ENCODE measurements at regions of chr11 and their contacts with region 1.

Region 1: GRCh38 chr11:1852877-1853276 is at the start of gene LSP1:
- DNase-seq: peak; percentile 95
- ATAC-seq: peak; percentile 65
- H3K4me3 Mint-ChIP-seq: peak within 1 kb of the TSS; percentile 86
- H3K27ac Mint-ChIP-seq: peak within 1 kb of the TSS; percentile 95
- H3K4me1 Mint-ChIP-seq: peaks cover 53% of the 10 kb centered on the region
- H3K27me3 Mint-ChIP-seq: no peaks in the 10 kb centered on the region
- CTCF ChIP-seq: no peak
- total RNA-seq, gene LSP1: 247 to 251 TPM

Region 2: DNA sequence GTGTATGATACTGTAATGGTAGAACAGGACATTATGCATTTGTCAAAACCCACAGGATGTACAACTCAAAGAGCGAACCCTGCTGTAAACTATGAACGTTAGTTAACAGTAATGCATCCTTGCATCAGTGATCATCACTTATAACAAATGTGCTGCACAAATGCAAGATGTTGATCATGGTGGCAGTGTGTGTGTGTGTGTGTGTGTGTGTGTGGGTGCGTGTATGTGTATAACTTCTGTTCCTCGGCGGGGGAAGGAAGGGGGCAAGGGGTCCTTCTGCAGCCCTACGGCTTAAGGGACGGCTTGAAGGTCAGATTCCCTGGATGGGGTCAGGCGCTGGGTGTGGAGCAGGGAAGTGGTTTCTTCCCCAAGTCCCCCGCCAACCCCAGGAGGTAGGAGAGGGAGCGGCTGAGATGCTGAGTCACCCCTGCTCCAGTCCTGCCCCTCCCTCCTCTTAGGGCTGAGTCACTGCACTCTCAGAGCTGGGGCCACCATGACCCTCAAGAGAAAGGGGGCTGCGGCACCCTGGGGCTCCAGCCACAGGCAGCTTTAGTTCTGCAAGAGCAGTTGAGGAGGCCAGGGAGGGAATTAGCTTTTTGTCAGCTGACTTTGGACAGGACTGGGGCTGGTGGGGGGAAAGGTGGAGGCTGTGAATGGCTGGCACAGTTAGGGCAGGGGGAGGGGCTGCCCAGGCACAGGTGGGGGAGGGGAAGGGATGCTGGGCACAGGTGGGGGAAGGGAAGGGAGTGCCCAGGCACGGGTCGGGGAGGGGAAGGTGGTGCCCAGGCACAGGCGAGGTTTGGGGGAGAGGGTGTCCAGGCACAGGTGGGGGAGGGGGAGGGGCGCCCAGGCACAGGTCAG is 80.4 kb before region 1 on chr11:
- CTCF ChIA-PET with region 1: no interaction called
- POLR2A ChIA-PET with region 1: no interaction called
- intact Hi-C with region 1: no loop called
- DNase-seq: peak; percentile 77
- ATAC-seq: peak; percentile 96
- H3K4me3 Mint-ChIP-seq: peak overlapping the region; percentile 18
- H3K27ac Mint-ChIP-seq: peak overlapping the region; percentile 75
- H3K4me1 Mint-ChIP-seq: peaks cover 18% of the 10 kb centered on the region
- H3K27me3 Mint-ChIP-seq: no peaks in the 10 kb centered on the region
- CTCF ChIP-seq: no peak

Region 3: DNA sequence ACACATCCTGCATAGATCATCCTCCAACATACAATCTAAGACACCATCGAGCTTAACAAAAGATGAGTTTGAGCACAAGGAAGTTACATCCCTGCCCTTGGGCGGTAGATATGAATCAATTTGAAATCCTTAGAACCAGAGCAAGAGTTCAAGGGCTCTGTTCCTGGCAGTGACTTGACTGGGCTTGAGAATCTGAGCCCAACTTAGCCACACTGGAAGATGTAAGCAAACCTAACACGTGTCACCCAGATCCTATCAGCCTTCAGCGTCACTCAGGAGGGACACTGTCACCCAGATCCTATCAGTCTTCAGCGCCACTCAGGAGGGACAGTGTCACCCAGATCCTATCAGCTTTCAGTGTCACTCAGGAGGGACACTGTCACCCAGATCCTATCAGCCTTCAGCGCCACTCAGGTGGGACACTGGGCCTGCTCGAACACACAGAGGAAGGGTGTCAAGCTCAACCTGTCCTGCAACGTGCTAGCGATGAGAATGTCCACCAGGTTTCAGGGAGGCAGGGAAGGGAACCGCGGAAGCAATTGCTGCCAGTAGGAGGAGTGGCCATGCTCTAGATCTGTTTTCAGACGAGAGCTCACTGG is 56.4 kb before region 1 on chr11:
- CTCF ChIA-PET with region 1: no interaction called
- POLR2A ChIA-PET with region 1: no interaction called
- intact Hi-C with region 1: no loop called
- DNase-seq: no peak
- ATAC-seq: no peak
- H3K4me3 Mint-ChIP-seq: no peak overlapping the region
- H3K27ac Mint-ChIP-seq: no peak overlapping the region
- H3K4me1 Mint-ChIP-seq: peaks cover 8% of the 10 kb centered on the region
- H3K27me3 Mint-ChIP-seq: peaks cover 1% of the 10 kb centered on the region
- CTCF ChIP-seq: no peak

Region 4: GRCh38 chr11:1863352-1864216 is 10.7 kb after region 1 on chr11:
- CTCF ChIA-PET with region 1: interaction called, 5 read pairs
- POLR2A ChIA-PET with region 1: interaction called, 20 read pairs
- intact Hi-C with region 1: no loop called
- DNase-seq: no peak
- ATAC-seq: no peak
- H3K4me3 Mint-ChIP-seq: no peak overlapping the region
- H3K27ac Mint-ChIP-seq: no peak overlapping the region
- H3K4me1 Mint-ChIP-seq: peaks cover 20% of the 10 kb centered on the region
- H3K27me3 Mint-ChIP-seq: no peaks in the 10 kb centered on the region
- CTCF ChIP-seq: no peak

Region 5: DNA sequence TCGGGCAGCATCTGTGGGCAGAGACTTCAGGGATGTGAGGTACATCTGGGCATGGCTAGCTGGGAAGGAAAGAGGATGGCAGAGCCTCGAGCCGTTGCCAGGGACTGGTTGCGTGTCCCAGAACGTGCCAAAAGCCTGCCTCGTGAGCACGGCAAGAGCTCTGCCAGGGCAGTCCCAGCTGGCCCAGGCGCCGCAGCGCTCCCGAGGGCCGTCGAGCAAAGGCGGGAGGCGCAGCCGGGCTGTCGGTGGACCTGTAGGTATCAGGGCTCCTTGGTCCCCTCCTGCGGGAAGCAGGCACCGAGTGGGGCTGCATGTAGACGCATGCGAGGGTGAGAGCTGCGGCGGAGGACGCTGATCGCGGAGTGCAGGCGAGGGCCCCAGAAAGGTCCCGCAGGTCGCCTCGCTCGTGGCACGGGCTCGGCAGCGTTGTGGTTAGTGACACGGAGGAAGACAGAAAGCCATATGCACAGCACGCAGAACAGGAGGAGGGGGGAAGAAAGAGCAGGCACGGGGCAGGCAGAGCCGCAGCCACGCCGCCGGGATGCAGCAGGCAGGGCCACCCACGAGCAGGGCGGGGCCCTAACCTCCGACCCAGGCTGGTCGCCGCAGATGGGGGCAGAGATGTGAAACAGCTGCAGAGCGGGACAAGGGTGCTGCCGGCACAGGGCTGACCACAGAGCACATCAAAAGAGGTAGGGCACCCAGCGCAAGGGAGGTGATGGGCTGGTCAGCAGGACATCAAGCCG is 18.0 kb after region 1 on chr11:
- CTCF ChIA-PET with region 1: interaction called, 10 read pairs
- POLR2A ChIA-PET with region 1: interaction called, 20 read pairs
- intact Hi-C with region 1: no loop called
- DNase-seq: peak; percentile 61
- ATAC-seq: peak; percentile 79
- H3K4me3 Mint-ChIP-seq: peak overlapping the region; percentile 9
- H3K27ac Mint-ChIP-seq: peak overlapping the region; percentile 22
- H3K4me1 Mint-ChIP-seq: peaks cover 51% of the 10 kb centered on the region
- H3K27me3 Mint-ChIP-seq: no peaks in the 10 kb centered on the region
- CTCF ChIP-seq: no peak

Measured in activated CD8-positive, alpha-beta T cell treated with anti-CD3 and anti-CD28 coated beads for 36 hours (primary cell).